ENCODE measurements at regions of chr20 and their contacts with region 1.

Region 1: GRCh38 chr20:23361598-23362384 is at the start of gene GZF1:
- DNase-seq: peak; percentile 97
- H3K4me3 ChIP-seq: peak within 1 kb of the TSS; percentile 79
- H3K27ac ChIP-seq: peak within 1 kb of the TSS; percentile 98
- H3K4me1 ChIP-seq: peaks cover 12% of the 10 kb centered on the region
- H3K27me3 ChIP-seq: no peaks in the 10 kb centered on the region
- CTCF ChIP-seq: no peak
- total RNA-seq, gene GZF1: 8.5 to 9.6 TPM

Region 2: GRCh38 chr20:23086056-23086566 is 275.7 kb before region 1 on chr20 and contains the start of gene CD93:
- intact Hi-C with region 1: no loop called
- DNase-seq: no peak
- H3K4me3 ChIP-seq: peak within 1 kb of the TSS; percentile 15
- H3K27ac ChIP-seq: peak within 1 kb of the TSS; percentile 61
- H3K4me1 ChIP-seq: no peaks in the 10 kb centered on the region
- H3K27me3 ChIP-seq: no peaks in the 10 kb centered on the region
- CTCF ChIP-seq: no peak
- total RNA-seq, gene CD93: 5.3 to 20.3 TPM

Region 3: GRCh38 chr20:23420943-23421931 is 59.4 kb after region 1 on chr20 and contains the start of gene NAPB:
- intact Hi-C with region 1: loop called (anchors 5 kb)
- DNase-seq: peak; percentile 96
- H3K4me3 ChIP-seq: peak within 1 kb of the TSS; percentile 96
- H3K27ac ChIP-seq: peak within 1 kb of the TSS; percentile 72
- H3K4me1 ChIP-seq: no peaks in the 10 kb centered on the region
- H3K27me3 ChIP-seq: no peaks in the 10 kb centered on the region
- CTCF ChIP-seq: peak; percentile 39
- total RNA-seq, gene NAPB: 7.5 to 8.4 TPM

Measured in colonic mucosa (tissue), 4 donors.